PC-3 (cell line): ENCODE measurements at regions of chr7 and their contacts with region 1.

Region 1: GRCh38 chr7:78734626-78735025 is 718.8 kb downstream of the MAGI2 start:
- DNase-seq: no peak
- ATAC-seq: no peak
- H3K4me3 ChIP-seq: no peak overlapping the region
- H3K27ac ChIP-seq: no peak overlapping the region
- H3K4me1 ChIP-seq: no peaks in the 10 kb centered on the region
- H3K27me3 ChIP-seq: peaks cover 8% of the 10 kb centered on the region; the same call in 1 of the 2 replicates
- CTCF ChIP-seq: no peak

Region 2: GRCh38 chr7:78716876-78717275 is 17.8 kb before region 1 on chr7:
- CTCF ChIA-PET with region 1: no interaction called
- POLR2A ChIA-PET with region 1: no interaction called
- intact Hi-C with region 1: no loop called
- DNase-seq: no peak
- ATAC-seq: no peak
- H3K4me3 ChIP-seq: no peak overlapping the region
- H3K27ac ChIP-seq: no peak overlapping the region
- H3K4me1 ChIP-seq: no peaks in the 10 kb centered on the region
- H3K27me3 ChIP-seq: no peaks in the 10 kb centered on the region
- CTCF ChIP-seq: no peak

Region 3: DNA sequence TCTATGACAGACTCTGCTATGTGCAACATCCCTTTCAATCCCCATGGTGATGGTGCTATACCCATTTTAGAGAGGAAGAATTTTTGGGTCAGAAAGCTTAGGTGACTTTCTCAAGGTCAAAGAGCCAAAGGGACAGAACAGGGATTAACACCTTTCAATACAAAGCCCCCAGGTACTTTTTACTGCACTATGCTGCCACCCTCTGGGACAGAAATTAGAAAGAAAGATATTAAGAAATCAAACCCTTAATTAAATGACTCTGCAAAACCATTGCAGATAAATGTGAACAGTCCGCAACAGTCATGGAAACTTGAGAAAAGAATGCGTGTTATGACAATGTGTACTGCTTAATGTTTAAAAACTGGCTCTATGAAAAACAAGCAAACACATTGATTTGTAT is 45.2 kb after region 1 on chr7:
- CTCF ChIA-PET with region 1: no interaction called
- POLR2A ChIA-PET with region 1: no interaction called
- intact Hi-C with region 1: loop called (anchors 1 kb)
- DNase-seq: no peak
- ATAC-seq: no peak
- H3K4me3 ChIP-seq: no peak overlapping the region
- H3K27ac ChIP-seq: no peak overlapping the region
- H3K4me1 ChIP-seq: peaks cover 7% of the 10 kb centered on the region
- H3K27me3 ChIP-seq: peaks cover 11% of the 10 kb centered on the region; the same call in 1 of the 2 replicates
- CTCF ChIP-seq: peak; percentile 44

Region 4: DNA sequence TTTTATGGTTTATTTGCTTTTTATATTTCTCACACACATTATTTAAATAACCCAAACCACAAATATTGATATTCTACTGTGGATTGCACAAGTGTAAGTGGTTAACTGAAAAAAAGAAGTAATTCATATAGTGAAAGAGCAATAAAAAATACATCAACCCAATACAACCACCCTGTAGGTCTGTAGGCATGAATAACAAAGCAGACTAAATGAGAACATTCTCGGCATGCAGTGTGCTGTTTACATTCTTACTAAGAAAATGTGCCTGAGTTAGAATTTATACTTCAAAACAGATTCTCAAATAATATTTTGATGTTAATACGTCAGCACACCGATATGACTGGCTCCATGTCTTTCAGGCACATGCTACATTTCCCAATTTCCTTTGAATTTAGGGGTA is 58.0 kb after region 1 on chr7:
- CTCF ChIA-PET with region 1: no interaction called
- POLR2A ChIA-PET with region 1: no interaction called
- intact Hi-C with region 1: no loop called
- DNase-seq: no peak
- ATAC-seq: no peak
- H3K4me3 ChIP-seq: no peak overlapping the region
- H3K27ac ChIP-seq: no peak overlapping the region
- H3K4me1 ChIP-seq: no peaks in the 10 kb centered on the region
- H3K27me3 ChIP-seq: no peaks in the 10 kb centered on the region
- CTCF ChIP-seq: no peak

Region 5: GRCh38 chr7:78850093-78850740 is 115.6 kb after region 1 on chr7:
- CTCF ChIA-PET with region 1: no interaction called
- POLR2A ChIA-PET with region 1: no interaction called
- intact Hi-C with region 1: no loop called
- DNase-seq: no peak
- ATAC-seq: no peak
- H3K4me3 ChIP-seq: no peak overlapping the region
- H3K27ac ChIP-seq: no peak overlapping the region
- H3K4me1 ChIP-seq: no peaks in the 10 kb centered on the region
- H3K27me3 ChIP-seq: no peaks in the 10 kb centered on the region
- CTCF ChIP-seq: no peak

Region 6: DNA sequence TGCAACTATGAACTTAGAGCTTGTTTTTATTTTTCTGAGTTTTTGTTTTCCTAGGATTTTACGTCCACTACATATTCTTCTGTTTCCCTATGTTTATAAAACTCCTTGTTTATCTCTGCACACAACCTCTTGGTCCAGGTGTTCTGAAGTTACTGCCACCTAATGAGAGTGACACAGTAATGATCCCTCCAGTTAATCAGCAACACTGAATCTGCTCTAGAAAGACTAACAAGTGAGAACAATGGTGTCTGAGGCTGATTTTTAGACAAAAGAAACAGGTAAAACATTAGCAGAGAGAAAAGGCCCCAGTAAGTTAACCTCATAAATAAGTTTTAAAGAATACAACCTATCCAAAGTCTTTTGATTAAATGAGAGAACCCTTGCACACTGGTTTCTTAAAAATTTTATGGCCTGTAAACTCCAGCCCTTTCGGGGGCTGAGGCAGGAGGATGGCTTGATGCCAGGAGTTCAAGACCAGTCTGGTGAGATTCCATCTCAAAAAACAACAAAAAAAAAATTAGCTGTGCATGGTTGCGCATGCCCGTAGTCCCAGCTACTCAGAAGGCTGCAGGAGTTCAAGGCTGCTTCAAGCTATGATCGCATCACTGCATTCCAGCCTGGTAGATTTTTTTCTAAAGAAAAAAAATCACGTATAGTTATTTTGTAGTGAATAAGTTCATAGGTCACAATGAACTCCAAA is 321.2 kb after region 1 on chr7:
- CTCF ChIA-PET with region 1: no interaction called
- POLR2A ChIA-PET with region 1: no interaction called
- intact Hi-C with region 1: loop called (anchors 5 kb)
- DNase-seq: peak; percentile 84
- ATAC-seq: peak; percentile 15; the same call in 1 of the 2 replicates
- H3K4me3 ChIP-seq: no peak overlapping the region
- H3K27ac ChIP-seq: no peak overlapping the region
- H3K4me1 ChIP-seq: peaks cover 10% of the 10 kb centered on the region; the same call in 1 of the 2 replicates
- H3K27me3 ChIP-seq: no peaks in the 10 kb centered on the region
- CTCF ChIP-seq: no peak